Naive thymus-derived CD4-positive, alpha-beta T cell (primary cell): ENCODE measurements at regions of chr13 and their contacts with region 1.

Region 1: DNA sequence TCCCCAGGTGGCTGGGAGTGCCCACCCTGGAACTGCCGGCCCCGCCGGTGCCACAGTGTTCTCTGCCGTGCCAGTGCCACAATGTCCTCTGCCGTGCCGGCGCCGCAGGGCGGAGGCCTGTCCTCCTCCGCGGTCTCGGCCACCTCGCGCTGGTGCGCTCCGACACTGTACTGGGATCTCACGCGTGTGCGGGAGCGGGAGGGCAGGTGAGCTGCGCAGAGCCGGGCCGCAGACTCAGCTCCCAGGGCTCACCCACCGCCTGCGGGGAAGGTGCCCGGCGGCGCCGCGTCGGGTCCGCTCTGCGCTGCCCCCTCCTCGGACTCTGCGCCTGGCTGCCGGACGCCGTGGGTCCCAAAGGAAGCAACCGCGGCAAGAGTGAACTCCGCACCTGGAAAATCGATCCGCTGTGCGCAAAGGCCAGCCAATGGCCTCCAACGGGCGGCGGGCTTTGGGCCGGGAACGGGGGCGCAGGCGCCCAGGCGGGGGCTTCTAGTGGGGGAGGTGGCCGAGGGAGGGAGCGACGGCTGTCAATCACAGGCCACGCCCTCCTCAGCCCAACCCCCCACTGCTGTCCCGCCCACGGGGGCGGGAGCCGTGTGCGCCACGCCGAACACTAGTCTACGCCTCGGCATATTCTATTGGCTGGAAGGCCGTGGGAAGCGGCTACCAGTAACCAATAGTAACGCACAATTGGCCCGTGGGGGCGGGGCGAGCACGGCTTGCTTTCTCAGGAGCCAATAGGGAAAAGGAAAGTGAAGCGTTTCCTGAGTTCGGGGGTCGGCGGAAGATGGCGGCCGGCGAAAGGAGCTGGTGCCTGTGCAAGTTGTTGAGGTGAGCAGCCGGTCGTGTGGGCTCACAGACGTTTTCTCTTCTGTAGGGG is at the start of gene ALG11:
- DNase-seq: peak; percentile 98 to 100 (median 99)
- ATAC-seq: peak; percentile 100
- H3K4me3 ChIP-seq: peak within 1 kb of the TSS; percentile 92
- H3K4me3 Mint-ChIP-seq: peak within 1 kb of the TSS; percentile 90 to 100 (median 99)
- H3K27ac ChIP-seq: peak within 1 kb of the TSS; percentile 76
- H3K27ac Mint-ChIP-seq: peak within 1 kb of the TSS; percentile 88 to 99 (median 95)
- H3K4me1 ChIP-seq: peaks cover 9 to 16% of the 10 kb centered on the region in 2 donors
- H3K4me1 Mint-ChIP-seq: peaks cover 19 to 45% (median 29%) of the 10 kb centered on the region in 7 donors
- H3K27me3 ChIP-seq: no peaks in the 10 kb centered on the region
- H3K27me3 Mint-ChIP-seq: peaks cover 14 to 38% (median 23%) of the 10 kb centered on the region in 5 donors
- total RNA-seq, gene ALG11: 29.3 to 45.6 (median 38.3) TPM

Region 2: DNA sequence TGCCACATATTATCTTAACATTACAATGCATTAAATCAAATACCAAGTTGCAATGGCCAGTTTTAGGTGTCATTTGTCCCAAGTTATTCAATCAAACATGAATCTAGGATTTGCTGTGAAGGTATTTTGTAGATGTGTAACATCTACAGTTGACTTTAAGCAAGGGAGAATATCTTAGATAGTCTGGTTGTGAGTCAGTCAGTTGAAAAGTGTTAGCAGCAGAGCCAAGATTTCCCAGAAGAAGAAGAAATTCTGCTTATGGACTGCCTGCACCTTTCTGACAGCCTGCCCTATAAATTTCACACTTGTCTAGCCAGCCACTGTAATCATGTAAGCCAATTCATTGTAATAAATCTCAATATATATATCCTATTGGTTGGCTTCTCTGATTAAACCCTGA is 517.7 kb before region 1 on chr13:
- CTCF ChIA-PET with region 1: no interaction called
- POLR2A ChIA-PET with region 1: no interaction called
- intact Hi-C with region 1: no loop called
- DNase-seq: no peak
- ATAC-seq: no peak
- H3K4me3 ChIP-seq: no peak overlapping the region
- H3K4me3 Mint-ChIP-seq: no peak overlapping the region
- H3K27ac ChIP-seq: no peak overlapping the region
- H3K27ac Mint-ChIP-seq: no peak overlapping the region
- H3K4me1 ChIP-seq: no peaks in the 10 kb centered on the region
- H3K4me1 Mint-ChIP-seq: no peaks in the 10 kb centered on the region
- H3K27me3 ChIP-seq: no peaks in the 10 kb centered on the region
- H3K27me3 Mint-ChIP-seq: peaks cover 0 to 36% (median 6%) of the 10 kb centered on the region in 5 donors

Region 3: DNA sequence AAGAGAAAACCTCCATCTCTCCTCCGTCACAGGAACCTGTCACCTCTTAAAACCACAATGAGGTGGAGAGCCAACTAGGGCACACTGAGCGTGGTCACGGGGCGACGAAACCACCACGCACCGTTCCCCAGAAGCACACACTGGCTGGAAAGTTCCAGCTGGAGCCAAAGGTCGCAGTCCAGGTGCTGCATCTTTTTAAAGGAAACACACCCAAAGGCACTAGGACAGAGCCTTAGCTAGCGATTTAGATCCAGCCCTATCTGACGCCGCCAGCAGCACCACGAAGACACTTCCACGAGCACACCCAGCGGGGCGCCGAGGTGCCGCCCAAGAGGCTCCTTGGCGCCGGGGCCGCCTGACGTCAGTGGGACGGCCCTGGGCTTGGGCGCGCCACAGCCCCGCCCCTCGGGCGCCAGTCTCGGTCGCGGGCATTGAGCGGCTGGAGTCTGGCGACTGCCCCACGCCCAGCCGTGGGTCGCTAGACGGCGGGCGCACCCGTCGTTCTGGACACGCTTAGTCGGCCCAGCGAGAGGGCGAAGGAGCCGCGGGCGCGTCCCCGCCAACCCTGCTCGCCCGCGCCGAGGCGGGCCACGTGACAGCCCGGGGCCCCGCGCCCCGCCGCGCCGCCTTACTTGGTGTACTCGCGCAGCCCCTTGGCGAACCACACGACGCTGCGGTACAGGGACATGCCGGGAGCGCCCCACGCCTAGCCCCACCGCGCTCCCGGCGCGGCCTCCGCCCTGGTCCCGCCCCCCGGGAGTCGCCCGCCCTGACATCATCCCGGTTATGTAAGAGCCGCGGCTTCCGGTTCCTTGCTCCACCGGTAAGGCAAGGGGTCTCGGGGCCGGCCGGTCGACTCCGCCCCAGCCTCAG is 208.2 kb before region 1 on chr13 and contains the start of gene DHRS12:
- CTCF ChIA-PET with region 1: interaction called, 3 read pairs
- POLR2A ChIA-PET with region 1: no interaction called
- intact Hi-C with region 1: loop called (anchors 1 kb)
- DNase-seq: peak; percentile 83 to 93 (median 92)
- ATAC-seq: peak; percentile 83
- H3K4me3 ChIP-seq: peak within 1 kb of the TSS; percentile 81
- H3K4me3 Mint-ChIP-seq: peak within 1 kb of the TSS; percentile 84 to 99 (median 96)
- H3K27ac ChIP-seq: peak within 1 kb of the TSS; percentile 100
- H3K27ac Mint-ChIP-seq: peak within 1 kb of the TSS; percentile 99 to 100 (median 100)
- H3K4me1 ChIP-seq: peaks cover 29 to 32% of the 10 kb centered on the region in 2 donors
- H3K4me1 Mint-ChIP-seq: peaks cover 28 to 70% (median 52%) of the 10 kb centered on the region in 7 donors
- H3K27me3 ChIP-seq: no peaks in the 10 kb centered on the region
- H3K27me3 Mint-ChIP-seq: peaks cover 0 to 6% (median 0%) of the 10 kb centered on the region in 5 donors
- total RNA-seq, gene DHRS12: 6.7 to 25.3 (median 20.1) TPM

Region 4: DNA sequence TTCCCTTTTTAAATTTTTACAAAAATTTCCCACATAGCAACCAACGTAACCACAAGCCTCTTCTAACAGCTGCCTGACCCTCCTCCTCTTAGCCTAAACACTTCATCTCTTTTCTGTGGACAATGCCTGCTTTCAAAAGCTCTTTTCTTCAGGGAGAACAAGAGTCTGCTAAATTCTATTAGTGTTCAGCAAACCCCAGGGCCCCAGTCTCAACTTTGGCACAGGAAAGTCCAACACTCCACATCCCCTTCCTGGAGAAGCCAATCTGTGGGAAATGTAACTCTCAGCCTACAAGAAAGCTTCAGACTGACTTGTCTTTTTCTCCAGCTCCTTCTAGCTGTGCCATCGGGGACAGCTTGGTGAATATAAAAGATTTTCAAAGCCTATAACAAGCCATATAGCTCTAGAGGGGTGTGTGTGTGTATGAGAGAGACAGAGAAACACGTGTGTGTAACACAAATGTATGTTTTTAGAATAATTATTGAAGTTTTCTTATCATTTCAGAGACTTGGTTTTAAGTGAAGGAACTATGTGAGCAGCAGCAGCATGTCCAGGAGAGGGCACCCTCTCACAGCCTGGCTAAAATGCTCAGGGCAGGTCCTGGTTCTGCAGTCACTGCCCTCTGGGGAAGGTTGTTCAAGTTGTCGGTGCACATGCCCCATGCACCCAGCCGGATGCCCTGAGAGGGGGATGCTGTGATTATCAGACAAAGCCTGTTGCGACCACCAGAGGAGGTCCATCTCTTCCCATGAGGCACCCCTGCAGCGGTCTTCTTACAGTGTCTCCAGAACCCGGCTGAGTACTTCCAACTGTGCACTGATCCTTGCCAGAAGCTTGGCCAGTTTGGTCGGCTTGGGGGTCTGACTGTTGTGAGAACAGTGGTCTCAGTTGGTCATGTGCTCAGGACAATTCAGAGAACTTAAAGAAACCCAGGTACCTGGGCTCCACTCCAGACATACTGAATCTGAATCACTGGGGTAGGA is 115.7 kb before region 1 on chr13:
- CTCF ChIA-PET with region 1: interaction called, 4 read pairs
- POLR2A ChIA-PET with region 1: no interaction called
- intact Hi-C with region 1: loop called in 1 of 2 experiments (anchors 1 kb)
- DNase-seq: peak in 8 of 9 donors; percentile 16 to 55 (median 40)
- ATAC-seq: peak; percentile 73
- H3K4me3 ChIP-seq: no peak overlapping the region
- H3K4me3 Mint-ChIP-seq: no peak overlapping the region
- H3K27ac ChIP-seq: no peak overlapping the region
- H3K27ac Mint-ChIP-seq: peak overlapping the region in 2 of 9 donors; percentile 22 to 42
- H3K4me1 ChIP-seq: no peaks in the 10 kb centered on the region
- H3K4me1 Mint-ChIP-seq: peaks cover 0 to 8% (median 0%) of the 10 kb centered on the region in 7 donors
- H3K27me3 ChIP-seq: no peaks in the 10 kb centered on the region
- H3K27me3 Mint-ChIP-seq: peaks cover 7 to 26% (median 11%) of the 10 kb centered on the region in 5 donors

Region 5: GRCh38 chr13:52001120-52001731 is 10.6 kb before region 1 on chr13:
- CTCF ChIA-PET with region 1: no interaction called
- POLR2A ChIA-PET with region 1: no interaction called
- intact Hi-C with region 1: loop called (anchors 1 kb)
- DNase-seq: peak in 6 of 9 donors; percentile 16 to 49 (median 38)
- ATAC-seq: peak; percentile 83
- H3K4me3 ChIP-seq: no peak overlapping the region
- H3K4me3 Mint-ChIP-seq: no peak overlapping the region
- H3K27ac ChIP-seq: no peak overlapping the region
- H3K27ac Mint-ChIP-seq: no peak overlapping the region
- H3K4me1 ChIP-seq: no peaks in the 10 kb centered on the region
- H3K4me1 Mint-ChIP-seq: peaks cover 0 to 7% (median 4%) of the 10 kb centered on the region in 7 donors
- H3K27me3 ChIP-seq: no peaks in the 10 kb centered on the region
- H3K27me3 Mint-ChIP-seq: peaks cover 0 to 35% (median 4%) of the 10 kb centered on the region in 5 donors

Region 6: GRCh38 chr13:52159321-52160086 is 147.6 kb after region 1 on chr13 and contains the start of gene NEK3:
- CTCF ChIA-PET with region 1: no interaction called
- POLR2A ChIA-PET with region 1: no interaction called
- intact Hi-C with region 1: loop called in 1 of 2 experiments (anchors 1 kb)
- DNase-seq: peak; percentile 32 to 69 (median 51)
- ATAC-seq: peak; percentile 83
- H3K4me3 ChIP-seq: peak within 1 kb of the TSS; percentile 69
- H3K4me3 Mint-ChIP-seq: peak within 1 kb of the TSS; percentile 86 to 92 (median 90)
- H3K27ac ChIP-seq: peak within 1 kb of the TSS; percentile 61
- H3K27ac Mint-ChIP-seq: peak within 1 kb of the TSS; percentile 62 to 94 (median 86)
- H3K4me1 ChIP-seq: peaks cover 6 to 15% of the 10 kb centered on the region in 2 donors
- H3K4me1 Mint-ChIP-seq: peaks cover 16 to 55% (median 51%) of the 10 kb centered on the region in 7 donors
- H3K27me3 ChIP-seq: no peaks in the 10 kb centered on the region
- H3K27me3 Mint-ChIP-seq: peaks cover 0 to 5% (median 0%) of the 10 kb centered on the region in 5 donors
- total RNA-seq, gene NEK3: 4.4 to 7.8 (median 4.5) TPM

Region 7: GRCh38 chr13:52450012-52450792 is 438.3 kb after region 1 on chr13 and contains the start of gene VPS36:
- CTCF ChIA-PET with region 1: no interaction called
- POLR2A ChIA-PET with region 1: no interaction called
- intact Hi-C with region 1: loop called (anchors 1 kb)
- DNase-seq: peak; percentile 85 to 99 (median 95)
- ATAC-seq: peak; percentile 85
- H3K4me3 ChIP-seq: peak within 1 kb of the TSS; percentile 92
- H3K4me3 Mint-ChIP-seq: peak within 1 kb of the TSS; percentile 80 to 98 (median 94)
- H3K27ac ChIP-seq: peak within 1 kb of the TSS; percentile 88
- H3K27ac Mint-ChIP-seq: peak within 1 kb of the TSS; percentile 58 to 96 (median 90)
- H3K4me1 ChIP-seq: peaks cover 26 to 27% of the 10 kb centered on the region in 2 donors
- H3K4me1 Mint-ChIP-seq: peaks cover 17 to 52% (median 45%) of the 10 kb centered on the region in 7 donors
- H3K27me3 ChIP-seq: no peaks in the 10 kb centered on the region
- H3K27me3 Mint-ChIP-seq: peaks cover 0 to 3% (median 0%) of the 10 kb centered on the region in 5 donors
- total RNA-seq, gene VPS36: 40.4 to 53.7 (median 49.5) TPM

Region 8: GRCh38 chr13:53885997-53886396 is 1874.1 kb after region 1 on chr13:
- CTCF ChIA-PET with region 1: no interaction called
- POLR2A ChIA-PET with region 1: no interaction called
- intact Hi-C with region 1: no loop called
- DNase-seq: no peak
- ATAC-seq: no peak
- H3K4me3 ChIP-seq: no peak overlapping the region
- H3K4me3 Mint-ChIP-seq: no peak overlapping the region
- H3K27ac ChIP-seq: no peak overlapping the region
- H3K27ac Mint-ChIP-seq: no peak overlapping the region
- H3K4me1 ChIP-seq: no peaks in the 10 kb centered on the region
- H3K4me1 Mint-ChIP-seq: no peaks in the 10 kb centered on the region
- H3K27me3 ChIP-seq: no peaks in the 10 kb centered on the region
- H3K27me3 Mint-ChIP-seq: no peaks in the 10 kb centered on the region